GM23248 (cell line): ENCODE measurements at regions of chr10 and their contacts with region 1.

Region 1: DNA sequence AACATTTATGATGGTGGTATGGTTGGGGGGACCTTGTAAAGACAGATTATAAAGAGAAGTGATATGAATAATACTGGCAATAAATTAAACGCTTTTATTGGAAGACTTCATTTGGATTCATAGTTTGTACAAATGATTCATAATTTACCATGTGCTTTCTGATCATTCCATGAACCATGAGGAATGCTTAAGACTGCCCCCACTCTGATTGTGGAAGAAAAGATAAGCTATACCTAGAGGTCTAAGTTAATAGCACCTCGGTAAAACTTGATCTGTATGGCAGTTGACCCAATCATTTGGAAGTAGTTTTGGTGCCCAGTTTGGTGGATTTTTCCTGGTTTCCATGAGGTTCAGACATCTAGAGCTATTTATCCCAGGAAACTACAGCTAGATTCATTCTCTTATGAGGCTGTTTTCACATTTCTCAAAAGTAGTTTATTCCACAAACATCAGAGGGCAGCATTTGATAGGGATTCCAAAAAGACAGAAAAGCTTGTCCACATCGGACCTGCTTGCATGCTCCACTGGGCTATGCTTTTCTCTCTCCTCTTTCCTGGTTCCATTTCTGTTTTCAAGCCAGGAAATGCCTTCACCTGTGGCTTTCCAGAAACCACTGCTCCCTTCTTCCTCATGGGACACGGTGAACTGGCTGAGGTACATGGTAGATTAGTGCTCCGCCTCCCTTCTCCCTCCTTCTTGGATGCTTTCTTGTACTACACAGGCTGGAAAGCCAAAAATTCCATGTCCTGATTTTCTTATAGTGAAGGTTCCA is 29.2 kb downstream of the TFAM start:
- DNase-seq: peak; percentile 86
- H3K4me3 ChIP-seq: peak overlapping the region; percentile 27; the same call in 1 of the 2 replicates
- H3K27ac ChIP-seq: no peak overlapping the region
- H3K4me1 ChIP-seq: peaks cover 21% of the 10 kb centered on the region
- H3K27me3 ChIP-seq: no peaks in the 10 kb centered on the region

Region 2: GRCh38 chr10:58334817-58335305 is 79.6 kb before region 1 on chr10 and contains the start of gene UBE2D1:
- in situ Hi-C with region 1: no loop called
- DNase-seq: peak; percentile 88
- H3K4me3 ChIP-seq: peak within 1 kb of the TSS; percentile 91
- H3K27ac ChIP-seq: peak within 1 kb of the TSS; percentile 46
- H3K4me1 ChIP-seq: peaks cover 6% of the 10 kb centered on the region; the same call in 1 of the 2 replicates
- H3K27me3 ChIP-seq: no peaks in the 10 kb centered on the region
- total RNA-seq, gene UBE2D1: 14.3 and 17.7 TPM in 2 replicates

Region 3: GRCh38 chr10:58529077-58529728 is 114.7 kb after region 1 on chr10:
- in situ Hi-C with region 1: loop called (anchors 10 kb)
- DNase-seq: no peak
- H3K4me3 ChIP-seq: no peak overlapping the region
- H3K27ac ChIP-seq: no peak overlapping the region
- H3K4me1 ChIP-seq: peaks cover 11% of the 10 kb centered on the region
- H3K27me3 ChIP-seq: no peaks in the 10 kb centered on the region

Region 4: GRCh38 chr10:58641095-58641531 is 226.7 kb after region 1 on chr10:
- in situ Hi-C with region 1: loop called (anchors 25 kb)
- DNase-seq: peak; percentile 96
- H3K4me3 ChIP-seq: peak overlapping the region; percentile 57
- H3K27ac ChIP-seq: peak overlapping the region; percentile 96
- H3K4me1 ChIP-seq: peaks cover 86% of the 10 kb centered on the region
- H3K27me3 ChIP-seq: no peaks in the 10 kb centered on the region

Region 5: GRCh38 chr10:58781873-58782488 is 367.5 kb after region 1 on chr10:
- in situ Hi-C with region 1: loop called (anchors 25 kb)
- DNase-seq: peak; percentile 73
- H3K4me3 ChIP-seq: no peak overlapping the region
- H3K27ac ChIP-seq: peak overlapping the region; percentile 37
- H3K4me1 ChIP-seq: peaks cover 72% of the 10 kb centered on the region
- H3K27me3 ChIP-seq: no peaks in the 10 kb centered on the region

Region 6: DNA sequence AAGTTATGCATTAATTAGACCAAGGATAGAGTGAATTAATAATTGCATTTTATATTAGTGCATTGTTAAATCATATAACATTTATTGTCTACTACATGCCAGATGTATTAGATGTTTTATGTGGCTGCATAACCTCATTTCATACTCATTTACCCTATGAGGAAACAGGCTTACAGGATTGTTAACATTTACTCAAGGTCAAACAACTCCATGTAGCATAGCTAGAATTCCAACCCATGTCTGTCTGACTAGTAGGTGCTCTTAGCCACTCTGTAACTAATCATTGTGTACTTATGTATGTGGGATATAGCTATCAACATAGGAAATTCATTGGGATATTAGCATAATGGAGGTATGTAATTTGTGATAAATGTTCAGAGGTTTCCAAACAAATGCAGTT is 808.3 kb after region 1 on chr10:
- in situ Hi-C with region 1: loop called (anchors 25 kb)
- DNase-seq: peak; percentile 13
- H3K4me3 ChIP-seq: no peak overlapping the region
- H3K27ac ChIP-seq: no peak overlapping the region
- H3K4me1 ChIP-seq: no peaks in the 10 kb centered on the region
- H3K27me3 ChIP-seq: no peaks in the 10 kb centered on the region

Region 7: GRCh38 chr10:59606551-59606961 is 1192.1 kb after region 1 on chr10:
- in situ Hi-C with region 1: loop called (anchors 25 kb)
- DNase-seq: peak; percentile 60
- H3K4me3 ChIP-seq: no peak overlapping the region
- H3K27ac ChIP-seq: no peak overlapping the region
- H3K4me1 ChIP-seq: no peaks in the 10 kb centered on the region
- H3K27me3 ChIP-seq: no peaks in the 10 kb centered on the region